ENCODE measurements at regions of chr2 and their contacts with region 1.

Region 1: DNA sequence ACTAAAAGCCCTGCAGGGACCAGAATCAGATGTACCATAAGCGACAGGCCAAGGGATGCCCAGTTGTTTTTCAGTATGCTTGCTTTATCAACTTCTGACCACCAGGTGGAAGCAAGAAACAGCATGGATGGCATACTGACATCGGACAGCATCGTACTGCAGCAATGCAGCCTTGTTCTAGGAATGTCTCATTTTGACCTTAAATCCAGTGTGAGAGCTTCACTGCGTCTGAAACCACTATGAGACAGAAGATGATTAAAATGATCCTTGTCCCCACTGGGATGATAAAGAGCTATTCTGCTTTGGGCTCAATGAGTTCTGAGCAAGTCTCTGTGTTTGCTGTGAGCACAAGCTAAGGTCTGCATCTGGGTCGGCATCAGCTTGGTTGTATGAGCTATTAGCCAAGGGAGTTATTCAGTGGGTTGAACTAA is 54.3 kb downstream of the CDK15 start:
- DNase-seq: peak; percentile 68
- CTCF ChIP-seq: peak; percentile 74

Region 2: DNA sequence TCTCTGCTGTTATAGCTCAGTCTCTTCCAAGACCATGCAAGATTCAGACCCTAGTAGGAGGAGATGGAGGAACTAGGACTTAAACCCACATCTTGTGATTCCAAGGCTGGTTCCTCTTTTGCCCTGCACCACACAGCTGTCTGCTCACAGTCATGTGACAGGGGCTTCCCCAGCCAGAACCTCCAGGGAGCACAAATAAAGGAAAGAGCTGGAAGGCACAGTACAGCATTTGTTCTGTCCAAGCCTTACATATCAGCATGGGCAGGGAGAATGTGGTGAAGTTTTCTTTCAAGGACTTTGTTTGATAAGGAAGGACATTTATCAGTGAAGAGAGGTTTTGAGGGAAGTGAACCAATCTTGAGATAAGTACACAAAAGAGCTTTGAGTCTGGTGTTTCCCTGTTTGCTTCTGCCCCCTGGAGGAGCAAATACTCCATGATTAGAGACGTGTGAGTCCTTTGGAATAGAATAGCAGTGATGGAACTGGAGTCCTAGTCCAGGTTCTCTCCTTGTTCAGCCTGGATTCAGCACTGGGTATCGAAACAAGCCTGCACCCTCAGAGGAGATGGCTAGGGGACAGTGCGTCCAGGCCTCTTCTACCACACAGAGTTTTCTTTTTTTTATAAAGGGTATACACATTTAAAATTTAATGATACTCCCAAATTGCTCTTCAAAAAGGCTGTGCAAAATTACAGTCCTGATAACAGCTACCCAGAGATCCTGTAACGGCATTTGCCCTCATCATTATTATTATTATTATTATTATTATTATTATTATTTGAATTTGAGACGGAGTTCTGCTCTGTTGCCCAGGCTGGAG is 702.3 kb before region 1 on chr2:
- CTCF ChIA-PET with region 1: no interaction called
- POLR2A ChIA-PET with region 1: no interaction called
- DNase-seq: peak; percentile 63
- CTCF ChIP-seq: peak; percentile 54

Region 3: DNA sequence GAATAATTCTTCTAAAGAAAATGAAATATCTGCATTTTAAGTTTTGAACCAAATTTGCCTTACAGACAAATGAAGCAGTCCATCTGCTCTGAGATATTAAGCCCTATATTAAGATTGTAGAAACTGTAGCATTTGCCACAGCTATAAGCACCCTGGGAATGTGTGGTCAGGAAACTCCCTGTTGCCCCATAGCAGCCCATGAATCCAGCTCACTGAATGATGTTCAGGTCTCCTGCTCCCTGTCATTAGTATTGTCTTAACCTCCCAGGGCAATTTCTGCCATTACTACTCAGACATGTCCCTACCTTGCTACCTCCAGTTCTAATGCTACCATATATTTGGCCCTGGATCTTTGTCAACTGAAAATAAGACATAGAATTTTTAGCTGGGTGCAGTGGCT is 13.2 kb before region 1 on chr2:
- CTCF ChIA-PET with region 1: interaction called, 21 read pairs
- POLR2A ChIA-PET with region 1: no interaction called
- DNase-seq: no peak
- CTCF ChIP-seq: no peak

Region 4: DNA sequence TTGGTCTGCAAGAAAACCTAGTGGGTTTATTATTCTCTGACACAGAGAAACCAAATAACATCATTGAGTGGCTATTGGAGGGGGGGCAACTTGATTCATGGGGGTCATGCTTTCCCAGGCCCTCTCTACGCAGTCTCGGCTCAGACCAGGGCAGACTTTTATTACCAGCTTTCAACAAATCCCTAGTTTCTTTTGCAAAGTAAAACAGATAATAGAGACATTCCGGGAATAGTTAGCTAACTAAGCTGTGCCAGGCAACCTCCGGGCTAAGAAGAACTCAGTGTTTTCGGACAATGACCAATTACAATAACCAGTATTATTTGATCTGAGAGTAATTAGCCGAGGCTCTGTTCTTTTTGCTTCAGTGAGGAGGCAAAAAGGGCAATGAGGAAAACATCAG is 11.9 kb after region 1 on chr2:
- CTCF ChIA-PET with region 1: interaction called, 15 read pairs
- POLR2A ChIA-PET with region 1: no interaction called
- DNase-seq: no peak
- CTCF ChIP-seq: no peak

Region 5: DNA sequence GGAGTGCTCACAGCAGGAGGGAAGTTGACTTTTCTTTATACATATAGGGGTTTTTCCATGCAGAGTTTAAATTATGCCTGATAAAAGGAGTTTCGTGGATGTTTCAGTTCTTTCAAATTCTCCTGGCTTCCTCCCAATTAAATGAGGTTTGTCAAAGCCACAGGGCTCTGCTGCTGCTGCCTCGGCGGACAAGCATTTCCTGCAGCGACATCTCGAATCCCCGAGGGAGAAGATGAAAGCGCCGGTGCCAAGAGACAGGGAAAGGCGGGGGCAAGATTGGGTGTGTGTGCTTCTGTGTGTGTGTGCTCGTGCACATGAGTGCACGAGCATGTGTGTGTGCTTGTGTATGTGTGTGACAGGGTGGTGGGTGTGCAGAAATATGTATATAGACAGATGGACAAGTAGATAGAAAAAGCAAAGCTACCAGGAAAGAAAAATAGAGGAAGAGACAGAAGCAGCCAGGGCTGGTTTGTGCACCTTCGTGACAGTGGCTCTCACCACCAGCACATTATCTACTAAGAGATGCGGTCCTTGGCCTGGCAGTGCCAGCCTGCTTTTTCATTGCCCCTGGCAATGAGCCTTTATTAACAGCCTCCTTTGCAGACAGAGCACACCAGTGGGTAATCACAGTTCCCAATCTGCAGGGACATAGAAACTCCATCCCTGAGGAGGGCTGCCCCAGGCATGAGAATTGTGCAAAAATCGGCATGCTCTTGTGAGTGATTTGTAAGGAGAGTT is 21.9 kb after region 1 on chr2:
- CTCF ChIA-PET with region 1: interaction called, 15 read pairs
- POLR2A ChIA-PET with region 1: no interaction called
- DNase-seq: no peak
- CTCF ChIP-seq: no peak

Region 6: DNA sequence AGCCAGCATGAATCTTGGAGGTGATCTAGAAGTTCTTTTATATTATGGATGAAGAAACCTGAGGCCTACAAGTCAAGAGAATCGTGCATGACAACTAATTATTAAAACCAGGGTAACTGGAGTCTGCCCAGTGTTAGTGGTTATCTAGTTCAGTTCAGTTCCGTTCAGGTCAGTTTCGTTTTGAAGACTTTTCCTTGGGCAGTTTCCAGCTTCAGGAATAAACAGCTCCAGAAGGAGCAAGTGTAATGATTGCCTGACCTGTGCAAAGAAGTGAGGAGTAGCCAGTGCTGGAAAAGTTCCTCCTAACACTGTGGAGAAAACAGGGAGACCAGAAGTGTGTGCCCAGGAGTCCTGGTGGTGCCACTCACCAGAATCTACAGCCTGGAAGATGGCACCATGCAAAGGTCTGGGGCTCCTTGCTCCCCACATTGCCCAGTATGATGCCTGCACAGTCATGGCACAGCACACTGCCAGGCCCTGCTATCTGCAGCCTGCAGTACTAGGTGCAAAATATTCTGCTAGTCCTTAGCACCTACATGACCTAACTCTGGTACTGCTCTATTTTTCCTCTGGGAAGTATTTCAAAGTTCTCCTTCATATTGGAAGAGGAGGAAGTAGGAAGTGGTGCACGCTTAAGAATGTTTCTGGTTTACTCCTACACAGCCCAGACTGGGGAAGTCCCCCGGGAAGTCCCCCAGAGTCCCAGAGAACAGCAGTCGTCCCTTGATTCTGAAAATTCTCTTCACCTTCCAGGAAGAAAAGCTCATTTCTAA is 312.0 kb after region 1 on chr2:
- CTCF ChIA-PET with region 1: interaction called, 75 read pairs
- POLR2A ChIA-PET with region 1: no interaction called
- DNase-seq: peak; percentile 67
- CTCF ChIP-seq: no peak

Region 7: GRCh38 chr2:202178342-202178958 is 317.8 kb after region 1 on chr2:
- CTCF ChIA-PET with region 1: interaction called, 75 read pairs
- POLR2A ChIA-PET with region 1: no interaction called
- DNase-seq: peak; percentile 57
- CTCF ChIP-seq: peak; percentile 80